Mammary epithelial cell (primary cell): ENCODE measurements at regions of chr20 and their contacts with region 1.

Region 1: DNA sequence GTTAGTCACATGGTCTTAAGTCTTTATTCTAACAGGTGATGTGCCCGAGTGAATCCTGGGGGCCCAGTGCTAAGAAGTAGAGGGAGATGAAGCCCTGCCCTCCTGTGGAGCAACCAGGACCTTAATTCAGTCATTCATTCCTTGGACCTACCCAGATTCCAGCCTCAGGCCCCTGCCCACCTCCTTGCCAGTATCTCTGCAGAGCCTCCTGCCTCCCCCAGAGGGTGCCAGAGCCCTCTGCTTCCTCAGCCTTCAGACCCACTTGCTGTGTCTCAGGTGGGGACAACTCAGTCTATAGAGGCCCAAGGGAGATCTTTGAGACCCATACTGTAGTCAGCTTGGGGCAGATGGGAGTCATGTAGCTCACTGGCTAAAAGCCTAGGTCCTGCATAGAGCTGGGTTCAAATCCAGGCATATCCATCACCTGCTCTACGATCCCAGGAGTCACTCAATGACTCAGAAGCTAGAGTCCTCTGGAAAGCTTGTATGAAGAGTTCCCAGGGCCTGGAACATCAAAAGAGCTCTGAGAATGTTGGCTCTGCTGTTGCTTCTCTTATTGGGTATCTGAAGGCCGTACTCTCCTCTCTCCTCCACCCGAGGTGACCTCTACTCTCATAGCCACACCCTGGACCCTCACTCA is 3.9 kb upstream of the SIGLEC1 start:
- DNase-seq: peak; percentile 16
- H3K4me3 ChIP-seq: no peak overlapping the region
- H3K27ac ChIP-seq: no peak overlapping the region
- H3K4me1 ChIP-seq: no peaks in the 10 kb centered on the region
- H3K27me3 ChIP-seq: no peaks in the 10 kb centered on the region
- CTCF ChIP-seq: peak; percentile 61 to 72

Region 2: DNA sequence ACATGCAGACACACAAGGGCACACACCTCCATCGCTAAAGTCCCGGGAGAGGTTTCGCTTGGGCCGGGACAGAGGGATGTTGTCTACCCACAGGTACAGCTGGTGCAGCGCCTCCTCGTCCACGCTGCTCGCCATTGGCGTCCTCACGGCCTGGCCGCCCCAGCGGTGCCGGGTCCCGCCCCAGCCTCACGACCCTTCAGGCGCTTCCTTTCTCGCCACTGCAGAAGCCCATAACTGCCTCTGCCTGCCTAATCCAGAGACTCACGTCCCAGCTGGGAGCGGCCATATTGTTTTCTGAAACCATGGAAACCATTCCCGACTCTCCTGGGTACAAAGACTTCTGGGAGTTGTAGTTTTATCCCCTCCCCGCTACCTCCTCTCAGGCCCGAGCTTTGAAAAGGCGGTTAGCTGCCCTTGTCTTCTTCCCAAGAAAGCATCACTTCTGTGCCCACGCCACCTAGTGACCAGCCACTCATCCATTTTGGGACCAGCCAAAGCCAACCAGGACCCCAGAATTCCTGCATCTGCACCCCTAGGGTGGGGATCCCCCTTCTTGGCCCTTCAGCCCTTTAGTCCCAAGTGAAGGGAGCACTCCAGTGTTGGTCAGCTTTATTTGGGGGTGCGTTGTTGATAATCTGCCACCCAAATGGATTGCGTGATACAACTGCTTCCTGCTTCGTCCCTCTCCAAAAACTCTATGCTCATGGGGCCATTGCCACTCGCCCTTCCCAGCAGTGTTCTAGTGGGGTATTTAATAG is 65.0 kb after region 1 on chr20 and contains the start of gene SPEF1:
- CTCF ChIA-PET with region 1: no interaction called
- dilution Hi-C with region 1: no loop called
- in situ Hi-C with region 1: no loop called
- intact Hi-C with region 1: loop called (anchors 1 kb)
- DNase-seq: peak; percentile 88
- H3K4me3 ChIP-seq: peak within 1 kb of the TSS; percentile 2 to 55 (median 51)
- H3K27ac ChIP-seq: peak within 1 kb of the TSS; percentile 11
- H3K4me1 ChIP-seq: peaks cover 44% of the 10 kb centered on the region
- H3K27me3 ChIP-seq: no peaks in the 10 kb centered on the region
- CTCF ChIP-seq: peak; percentile 7 to 56
- total RNA-seq, gene SPEF1: 0.17 to 0.26 TPM

Region 3: DNA sequence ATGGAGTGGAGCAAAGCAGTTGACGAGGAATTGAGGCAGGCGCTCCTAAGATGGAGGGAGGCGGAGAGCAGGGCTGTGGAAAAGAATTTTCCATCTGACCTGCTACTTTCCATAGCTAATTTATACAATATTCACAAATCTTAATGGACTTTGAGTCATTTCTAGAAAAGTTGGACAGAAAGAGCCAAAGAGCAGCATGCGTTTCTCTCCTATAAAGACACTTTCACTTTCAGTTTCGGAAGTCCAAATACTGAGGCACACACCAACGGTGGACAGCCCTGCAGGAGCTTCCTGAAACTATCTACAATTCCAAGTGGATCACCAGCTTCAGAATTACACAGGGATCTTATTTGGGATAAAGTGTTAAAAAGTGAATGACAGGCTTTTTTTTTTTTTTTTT is 216.4 kb after region 1 on chr20:
- CTCF ChIA-PET with region 1: no interaction called
- dilution Hi-C with region 1: no loop called
- in situ Hi-C with region 1: no loop called
- intact Hi-C with region 1: no loop called
- DNase-seq: no peak
- H3K4me3 ChIP-seq: no peak overlapping the region
- H3K27ac ChIP-seq: no peak overlapping the region
- H3K4me1 ChIP-seq: peaks cover 1% of the 10 kb centered on the region
- H3K27me3 ChIP-seq: no peaks in the 10 kb centered on the region
- CTCF ChIP-seq: no peak